ENCODE measurements at regions of chr6 and their contacts with region 1.

Region 1: DNA sequence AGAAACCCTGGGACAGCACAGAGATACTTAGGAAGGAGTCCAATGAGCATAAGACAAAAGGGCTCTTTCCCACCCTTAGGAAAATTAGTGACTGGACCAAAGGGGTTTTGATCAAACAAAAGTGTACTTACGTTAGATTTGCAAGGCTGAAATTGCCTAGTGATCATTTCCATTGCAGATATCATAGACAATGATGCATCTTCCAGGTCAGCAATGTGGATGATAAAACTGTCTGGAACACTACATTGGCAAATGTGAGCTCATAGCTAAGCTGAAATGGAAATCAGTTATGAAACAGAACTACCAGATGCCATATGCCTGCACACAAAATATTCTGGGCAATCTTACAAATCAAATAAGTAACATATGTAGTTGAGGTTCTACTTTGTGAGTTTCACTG is 34.0 kb downstream of the LY86 start:
- DNase-seq: no peak
- H3K4me3 ChIP-seq: no peak overlapping the region
- H3K27ac ChIP-seq: no peak overlapping the region
- H3K4me1 ChIP-seq: no peaks in the 10 kb centered on the region
- H3K27me3 ChIP-seq: no peaks in the 10 kb centered on the region
- CTCF ChIP-seq: no peak
- EP300 ChIP-seq: no peak
- POLR2A ChIP-seq: no peak

Region 2: GRCh38 chr6:6270948-6271535 is 351.5 kb before region 1 on chr6:
- in situ Hi-C with region 1: no loop called
- intact Hi-C with region 1: no loop called
- DNase-seq: no peak
- H3K4me3 ChIP-seq: no peak overlapping the region
- H3K27ac ChIP-seq: no peak overlapping the region
- H3K4me1 ChIP-seq: no peaks in the 10 kb centered on the region
- H3K27me3 ChIP-seq: peaks cover 13% of the 10 kb centered on the region
- CTCF ChIP-seq: no peak
- EP300 ChIP-seq: no peak
- POLR2A ChIP-seq: no peak

Region 3: DNA sequence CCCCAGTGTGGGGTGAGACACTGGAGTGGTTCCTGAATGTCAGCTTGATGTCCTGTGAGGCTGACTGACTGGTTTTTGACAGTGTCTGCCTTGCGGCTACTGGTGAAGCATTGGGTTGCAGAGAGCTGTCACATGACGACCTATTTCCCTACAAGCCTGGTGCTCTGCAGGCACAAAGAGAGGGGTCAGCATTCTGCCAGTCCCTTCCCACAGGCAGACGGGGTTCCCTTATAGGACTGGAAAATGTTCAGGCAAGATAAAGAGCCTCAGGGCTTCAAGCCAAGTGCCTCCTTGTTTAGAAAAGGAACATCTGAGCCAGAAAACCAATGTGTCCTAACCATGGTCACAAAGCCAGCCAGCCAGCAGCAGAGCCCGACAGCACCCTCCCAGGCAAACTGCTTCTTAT is 23.0 kb before region 1 on chr6:
- in situ Hi-C with region 1: no loop called
- intact Hi-C with region 1: no loop called
- DNase-seq: peak; percentile 13
- H3K4me3 ChIP-seq: no peak overlapping the region
- H3K27ac ChIP-seq: no peak overlapping the region
- H3K4me1 ChIP-seq: peaks cover 0 to 9% (median 0%) of the 10 kb centered on the region in 4 donors
- H3K27me3 ChIP-seq: peaks cover 5% of the 10 kb centered on the region
- CTCF ChIP-seq: no peak
- EP300 ChIP-seq: no peak
- POLR2A ChIP-seq: no peak

Region 4: GRCh38 chr6:7184502-7184901 is 562.0 kb after region 1 on chr6:
- in situ Hi-C with region 1: no loop called
- intact Hi-C with region 1: loop called (anchors 5 kb)
- DNase-seq: no peak
- H3K4me3 ChIP-seq: no peak overlapping the region
- H3K27ac ChIP-seq: no peak overlapping the region
- H3K4me1 ChIP-seq: peaks cover 0 to 7% (median 2%) of the 10 kb centered on the region in 4 donors
- H3K27me3 ChIP-seq: no peaks in the 10 kb centered on the region
- CTCF ChIP-seq: no peak
- EP300 ChIP-seq: no peak
- POLR2A ChIP-seq: no peak

Measured in transverse colon (tissue), 4 donors.